ENCODE measurements at regions of chr5 and their contacts with region 1.

Region 1: DNA sequence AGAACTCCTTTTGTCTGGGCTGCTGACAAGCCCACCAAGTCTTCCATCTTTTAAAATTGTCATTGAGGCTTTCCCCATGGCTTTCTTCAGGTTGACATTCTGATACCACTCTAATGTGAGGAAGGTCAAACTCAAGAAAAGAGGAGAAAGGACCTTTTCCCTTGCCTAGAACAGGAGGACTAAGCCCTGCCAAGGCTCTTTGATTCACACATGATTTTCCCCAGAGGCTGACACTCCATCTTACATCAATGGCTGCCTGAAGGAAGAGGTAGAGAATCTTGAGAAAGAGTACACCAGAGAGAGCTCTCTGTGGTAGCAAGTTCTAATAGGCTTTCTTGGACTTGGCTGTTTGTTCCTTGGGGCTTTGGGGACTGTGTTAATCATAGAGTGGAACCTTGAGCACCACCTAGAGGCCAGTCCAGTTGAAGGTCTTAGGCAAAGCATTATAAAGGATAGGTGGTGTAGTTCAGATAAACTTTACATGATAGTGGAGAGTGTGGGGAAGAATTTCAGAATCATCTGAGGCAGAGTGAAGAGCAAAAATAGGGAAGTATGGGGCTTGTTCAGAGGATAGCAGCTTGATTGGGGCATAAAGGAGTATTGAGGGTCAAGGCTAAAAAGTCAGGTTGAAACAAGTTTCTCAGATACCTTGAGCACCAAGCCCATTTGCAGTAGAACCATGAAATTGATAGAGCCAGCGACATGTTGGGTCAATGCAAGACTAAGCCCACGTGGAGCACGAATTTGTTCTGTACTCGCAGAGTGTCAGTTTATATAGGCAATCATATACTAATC is 36.7 kb downstream of the NDFIP1 start:
- DNase-seq: peak; percentile 84
- ATAC-seq: peak; percentile 90
- H3K4me3 Mint-ChIP-seq: no peak overlapping the region
- H3K27ac Mint-ChIP-seq: no peak overlapping the region
- H3K4me1 Mint-ChIP-seq: peaks cover 5% of the 10 kb centered on the region
- H3K27me3 Mint-ChIP-seq: no peaks in the 10 kb centered on the region
- CTCF ChIP-seq: peak; percentile 65

Region 2: DNA sequence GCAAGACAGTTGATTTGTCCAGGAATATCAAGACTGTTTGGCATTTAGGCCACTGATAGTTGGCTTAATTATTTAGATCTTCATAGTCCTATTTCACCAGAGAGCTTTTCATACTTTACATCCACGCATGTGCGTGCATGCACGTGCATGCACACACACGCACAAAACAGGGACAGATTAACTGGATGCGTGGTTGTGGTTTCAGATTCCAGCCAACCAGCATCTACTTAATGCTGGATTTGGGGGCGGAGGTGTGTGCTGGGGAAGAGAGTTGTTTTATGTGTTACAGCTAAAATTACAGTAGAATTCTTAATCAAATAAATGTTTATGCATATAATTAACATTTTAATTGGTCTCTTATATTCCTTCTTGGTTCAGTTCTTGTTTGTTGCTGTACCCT is 169.1 kb before region 1 on chr5:
- CTCF ChIA-PET with region 1: interaction called, 48 read pairs
- POLR2A ChIA-PET with region 1: no interaction called
- intact Hi-C with region 1: no loop called
- DNase-seq: no peak
- ATAC-seq: no peak
- H3K4me3 Mint-ChIP-seq: no peak overlapping the region
- H3K27ac Mint-ChIP-seq: no peak overlapping the region
- H3K4me1 Mint-ChIP-seq: peaks cover 29% of the 10 kb centered on the region
- H3K27me3 Mint-ChIP-seq: no peaks in the 10 kb centered on the region
- CTCF ChIP-seq: no peak

Region 3: GRCh38 chr5:141992349-141992963 is 152.8 kb before region 1 on chr5:
- CTCF ChIA-PET with region 1: interaction called, 592 read pairs
- POLR2A ChIA-PET with region 1: interaction called, 3 read pairs
- intact Hi-C with region 1: loop called (anchors 2 kb)
- DNase-seq: peak; percentile 93
- ATAC-seq: peak; percentile 90
- H3K4me3 Mint-ChIP-seq: no peak overlapping the region
- H3K27ac Mint-ChIP-seq: no peak overlapping the region
- H3K4me1 Mint-ChIP-seq: peaks cover 15% of the 10 kb centered on the region
- H3K27me3 Mint-ChIP-seq: no peaks in the 10 kb centered on the region
- CTCF ChIP-seq: peak; percentile 89

Region 4: DNA sequence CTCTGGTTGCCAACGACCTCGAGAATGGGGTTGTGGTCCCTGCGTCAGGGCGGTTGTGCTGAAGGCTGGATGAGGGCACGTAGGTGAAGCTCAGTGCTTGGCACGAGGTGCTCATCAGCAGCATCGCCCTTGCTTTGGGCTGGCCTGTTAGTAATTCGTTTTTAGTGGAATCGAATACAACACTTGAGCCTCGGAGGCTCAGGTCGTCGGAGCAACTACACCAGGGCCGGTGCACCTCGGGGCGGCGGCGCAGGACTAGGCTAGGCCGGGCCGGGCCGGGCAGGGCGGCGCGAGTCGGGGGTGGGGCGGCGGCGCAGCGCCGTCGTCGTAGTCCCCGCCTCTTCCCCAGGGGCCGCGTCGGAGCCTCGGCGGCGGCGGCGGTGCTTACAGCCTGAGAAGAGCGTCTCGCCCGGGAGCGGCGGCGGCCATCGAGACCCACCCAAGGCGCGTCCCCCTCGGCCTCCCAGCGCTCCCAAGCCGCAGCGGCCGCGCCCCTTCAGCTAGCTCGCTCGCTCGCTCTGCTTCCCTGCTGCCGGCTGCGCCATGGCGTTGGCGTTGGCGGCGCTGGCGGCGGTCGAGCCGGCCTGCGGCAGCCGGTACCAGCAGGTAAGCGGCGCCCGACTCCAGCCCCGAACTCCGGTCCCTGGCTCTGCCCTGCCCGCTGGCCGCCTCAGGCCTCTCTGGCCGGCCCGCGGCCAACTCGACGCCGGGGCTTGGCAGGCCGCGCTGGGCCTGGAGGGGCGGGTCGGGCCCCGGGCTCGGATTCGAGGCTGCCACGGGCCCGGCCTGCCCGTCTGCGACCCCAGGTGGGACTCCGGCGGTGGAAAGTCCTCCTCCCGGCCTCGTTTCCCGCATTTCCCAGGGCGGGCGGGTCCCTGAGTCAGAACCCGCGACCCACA is 36.6 kb before region 1 on chr5 and contains the start of gene NDFIP1:
- CTCF ChIA-PET with region 1: interaction called, 19 read pairs
- POLR2A ChIA-PET with region 1: interaction called, 6 read pairs
- intact Hi-C with region 1: loop called (anchors 5 kb)
- DNase-seq: peak; percentile 88
- ATAC-seq: peak; percentile 84
- H3K4me3 Mint-ChIP-seq: peak within 1 kb of the TSS; percentile 93
- H3K27ac Mint-ChIP-seq: peak within 1 kb of the TSS; percentile 96
- H3K4me1 Mint-ChIP-seq: peaks cover 65% of the 10 kb centered on the region
- H3K27me3 Mint-ChIP-seq: no peaks in the 10 kb centered on the region
- CTCF ChIP-seq: no peak
- total RNA-seq, gene NDFIP1: 93.8 to 96.9 TPM

Region 5: GRCh38 chr5:142128675-142129208 is 16.6 kb before region 1 on chr5:
- CTCF ChIA-PET with region 1: interaction called, 44 read pairs
- POLR2A ChIA-PET with region 1: interaction called, 6 read pairs
- intact Hi-C with region 1: no loop called
- DNase-seq: no peak
- ATAC-seq: peak; percentile 72
- H3K4me3 Mint-ChIP-seq: peak overlapping the region; percentile 6
- H3K27ac Mint-ChIP-seq: peak overlapping the region; percentile 60
- H3K4me1 Mint-ChIP-seq: peaks cover 57% of the 10 kb centered on the region
- H3K27me3 Mint-ChIP-seq: no peaks in the 10 kb centered on the region
- CTCF ChIP-seq: no peak

Region 6: DNA sequence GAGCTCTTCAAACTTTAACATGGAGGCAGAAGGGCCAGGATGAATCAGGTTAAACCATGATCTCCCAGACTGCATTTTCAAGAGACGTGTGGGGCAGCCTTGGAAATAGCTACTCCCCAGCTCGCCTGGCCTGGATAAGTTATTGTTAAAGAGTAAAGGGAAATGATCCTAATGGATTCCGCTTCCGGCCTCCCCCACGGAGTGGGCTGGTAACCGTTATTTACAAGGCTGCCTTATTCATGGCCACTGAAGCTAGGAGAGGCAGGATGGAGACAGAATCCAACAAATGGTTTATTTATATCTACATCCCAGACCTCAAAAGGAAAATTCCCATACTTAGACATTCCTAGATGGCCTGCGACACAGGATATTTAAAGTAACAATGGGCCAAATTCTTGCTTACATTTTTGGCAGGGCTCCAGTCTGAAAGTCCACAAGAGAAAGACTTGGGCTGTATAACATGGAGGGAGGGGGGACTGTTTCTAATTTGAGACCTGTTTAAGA is 151.7 kb after region 1 on chr5:
- CTCF ChIA-PET with region 1: no interaction called
- POLR2A ChIA-PET with region 1: no interaction called
- intact Hi-C with region 1: no loop called
- DNase-seq: no peak
- ATAC-seq: no peak
- H3K4me3 Mint-ChIP-seq: no peak overlapping the region
- H3K27ac Mint-ChIP-seq: no peak overlapping the region
- H3K4me1 Mint-ChIP-seq: no peaks in the 10 kb centered on the region
- H3K27me3 Mint-ChIP-seq: no peaks in the 10 kb centered on the region
- CTCF ChIP-seq: no peak

Measured in activated CD8-positive, alpha-beta T cell treated with anti-CD3 and anti-CD28 coated beads for 36 hours (primary cell).